ENCODE measurements at regions of chr18 and their contacts with region 1.

Region 1: GRCh38 chr18:6729247-6730091 is at the start of gene ARHGAP28:
- DNase-seq: peak; percentile 50 to 78
- ATAC-seq: peak; percentile 60 to 73
- H3K4me3 ChIP-seq: peak within 1 kb of the TSS; percentile 60 to 67 (median 64)
- H3K27ac ChIP-seq: peak within 1 kb of the TSS; percentile 80 to 88 (median 88)
- H3K4me1 ChIP-seq: peaks cover 11 to 35% of the 10 kb centered on the region in 2 donors
- H3K27me3 ChIP-seq: no peaks in the 10 kb centered on the region
- CTCF ChIP-seq: peak in 4 of 5 experiments; percentile 31 to 39 (median 34)
- POLR2A ChIP-seq: peak; percentile 59 to 72
- total RNA-seq, gene ARHGAP28: 4.6 to 17.9 (median 6.2) TPM

Region 2: GRCh38 chr18:6605115-6605869 is 124.2 kb before region 1 on chr18:
- in situ Hi-C with region 1: no loop called
- intact Hi-C with region 1: loop called (anchors 5 kb)
- DNase-seq: peak; percentile 19 to 21
- ATAC-seq: peak; percentile 70 to 92
- H3K4me3 ChIP-seq: no peak overlapping the region
- H3K27ac ChIP-seq: peak overlapping the region in 1 of 4 donors; percentile 43
- H3K4me1 ChIP-seq: peaks cover 0 to 5% of the 10 kb centered on the region in 2 donors
- H3K27me3 ChIP-seq: no peaks in the 10 kb centered on the region
- CTCF ChIP-seq: no peak
- POLR2A ChIP-seq: no peak

Region 3: GRCh38 chr18:6633310-6633709 is 96.2 kb before region 1 on chr18:
- in situ Hi-C with region 1: no loop called
- intact Hi-C with region 1: no loop called
- DNase-seq: no peak
- ATAC-seq: no peak
- H3K4me3 ChIP-seq: no peak overlapping the region
- H3K27ac ChIP-seq: no peak overlapping the region
- H3K4me1 ChIP-seq: no peaks in the 10 kb centered on the region
- H3K27me3 ChIP-seq: no peaks in the 10 kb centered on the region
- CTCF ChIP-seq: no peak
- POLR2A ChIP-seq: no peak

Region 4: DNA sequence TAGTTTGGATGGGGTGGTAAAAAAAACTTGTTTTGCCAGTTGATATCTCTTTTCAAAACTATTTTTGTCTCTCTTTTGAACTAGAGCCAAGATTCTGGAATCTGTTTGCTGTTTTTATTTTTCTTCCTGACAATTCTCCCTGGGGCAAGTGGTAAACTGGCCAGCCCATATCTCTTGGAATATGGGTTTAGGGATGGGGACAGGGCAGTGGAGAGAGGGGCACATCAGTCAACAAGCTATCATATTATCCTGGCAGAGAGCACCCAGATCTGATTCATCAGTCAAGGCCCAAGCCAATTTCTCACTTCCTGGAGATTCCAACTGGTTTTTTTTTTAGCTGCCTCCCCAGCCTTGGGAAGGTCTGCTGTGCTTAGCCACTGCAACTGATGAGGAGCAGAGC is 52.3 kb after region 1 on chr18:
- in situ Hi-C with region 1: no loop called
- intact Hi-C with region 1: loop called (anchors 2 kb)
- DNase-seq: peak; percentile 23 to 29
- ATAC-seq: peak; percentile 93 to 94
- H3K4me3 ChIP-seq: no peak overlapping the region
- H3K27ac ChIP-seq: peak overlapping the region; percentile 67 to 81 (median 76)
- H3K4me1 ChIP-seq: peaks cover 15% of the 10 kb centered on the region in 2 donors
- H3K27me3 ChIP-seq: no peaks in the 10 kb centered on the region
- CTCF ChIP-seq: no peak
- POLR2A ChIP-seq: no peak

Region 5: GRCh38 chr18:6878556-6879297 is 149.3 kb after region 1 on chr18:
- in situ Hi-C with region 1: loop called in 1 of 4 experiments (anchors 10 kb)
- intact Hi-C with region 1: loop called (anchors 5 kb)
- DNase-seq: no peak
- ATAC-seq: no peak
- H3K4me3 ChIP-seq: no peak overlapping the region
- H3K27ac ChIP-seq: no peak overlapping the region
- H3K4me1 ChIP-seq: peaks cover 0 to 4% of the 10 kb centered on the region in 2 donors
- H3K27me3 ChIP-seq: no peaks in the 10 kb centered on the region
- CTCF ChIP-seq: no peak
- POLR2A ChIP-seq: no peak

Measured in gastrocnemius medialis (tissue), 4 donors.